Right lobe of liver (tissue), 6 donors: ENCODE measurements at regions of chr18 and their contacts with region 1.

Region 1: GRCh38 chr18:57863706-57864105 is 60.6 kb upstream of the ATP8B1 start:
- DNase-seq: no peak
- ATAC-seq: no peak
- H3K4me3 ChIP-seq: no peak overlapping the region
- H3K27ac ChIP-seq: no peak overlapping the region
- H3K4me1 ChIP-seq: no peaks in the 10 kb centered on the region
- H3K27me3 ChIP-seq: no peaks in the 10 kb centered on the region
- CTCF ChIP-seq: no peak
- POLR2A ChIP-seq: no peak

Region 2: DNA sequence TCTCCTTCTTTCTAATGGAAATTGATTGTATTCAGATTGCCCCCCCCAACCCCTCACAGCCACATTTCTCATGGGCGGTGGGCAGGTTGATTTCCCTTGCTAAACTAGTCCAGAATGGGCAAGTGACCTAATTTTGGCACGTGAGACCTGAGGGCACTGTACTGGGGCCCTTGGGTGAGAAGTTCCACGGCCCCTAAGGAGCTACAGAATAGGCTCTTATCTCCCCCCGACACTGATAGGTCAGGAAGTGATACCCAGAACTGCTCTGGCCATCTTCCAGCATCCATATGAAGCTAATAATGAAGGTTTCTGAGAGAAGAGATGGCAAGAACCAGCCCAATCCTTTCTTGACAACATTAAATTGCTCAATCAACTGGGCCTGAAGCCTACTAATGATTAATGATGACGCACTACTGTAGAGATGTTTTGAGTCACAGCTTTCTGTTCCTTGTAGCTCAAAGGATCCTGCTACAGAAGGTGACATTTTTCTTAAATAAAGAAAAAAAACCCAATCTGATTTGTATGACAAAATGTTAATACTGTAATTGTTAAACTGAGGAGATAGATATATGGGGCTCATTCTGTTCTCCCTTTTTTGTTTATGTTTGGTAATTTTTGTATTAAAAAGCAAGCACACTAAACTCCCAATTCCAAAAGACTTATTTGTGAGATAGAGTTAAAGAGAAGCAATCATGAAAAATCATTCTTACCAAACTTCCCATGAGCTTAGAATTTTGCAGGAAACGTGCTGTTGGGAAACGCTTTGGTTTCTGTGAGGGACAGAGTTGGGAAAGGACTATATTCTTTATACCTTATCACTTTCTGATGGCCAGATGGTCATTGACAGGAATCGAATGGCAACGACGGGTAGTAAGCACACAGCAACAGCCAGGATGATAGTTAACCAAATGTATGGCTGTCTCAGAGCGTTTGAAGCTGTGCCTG is 213.9 kb before region 1 on chr18:
- intact Hi-C with region 1: loop called in 1 of 2 experiments (anchors 10 kb)
- DNase-seq: no peak
- ATAC-seq: peak; percentile 64 to 94 (median 82)
- H3K4me3 ChIP-seq: no peak overlapping the region
- H3K27ac ChIP-seq: peak overlapping the region in 2 of 3 donors; percentile 3 to 19
- H3K4me1 ChIP-seq: peaks cover 0 to 15% (median 0%) of the 10 kb centered on the region in 4 donors
- H3K27me3 ChIP-seq: no peaks in the 10 kb centered on the region
- CTCF ChIP-seq: no peak
- POLR2A ChIP-seq: no peak

Region 3: DNA sequence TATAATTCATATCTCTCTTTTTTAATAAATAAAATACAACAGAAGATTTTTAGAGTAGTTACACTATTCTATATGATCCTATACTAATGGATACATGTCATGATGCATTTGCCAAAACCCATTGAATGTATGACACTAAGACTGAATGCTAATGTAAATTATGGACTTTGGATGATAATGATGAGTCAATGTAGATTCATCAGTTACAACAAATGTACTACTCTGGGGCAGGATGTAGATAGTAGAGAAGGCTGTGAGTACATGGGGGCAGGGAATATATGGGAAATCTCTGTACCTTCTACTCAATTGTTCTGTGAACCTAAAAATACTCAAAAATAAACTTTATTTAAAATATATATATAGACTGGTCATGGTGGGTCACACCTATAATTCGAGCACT is 134.8 kb after region 1 on chr18:
- intact Hi-C with region 1: no loop called
- DNase-seq: no peak
- ATAC-seq: peak in 1 of 4 donors; percentile 63
- H3K4me3 ChIP-seq: no peak overlapping the region
- H3K27ac ChIP-seq: no peak overlapping the region
- H3K4me1 ChIP-seq: no peaks in the 10 kb centered on the region
- H3K27me3 ChIP-seq: no peaks in the 10 kb centered on the region
- CTCF ChIP-seq: no peak
- POLR2A ChIP-seq: no peak